ENCODE measurements at regions of chrX and their contacts with region 1.

Region 1: DNA sequence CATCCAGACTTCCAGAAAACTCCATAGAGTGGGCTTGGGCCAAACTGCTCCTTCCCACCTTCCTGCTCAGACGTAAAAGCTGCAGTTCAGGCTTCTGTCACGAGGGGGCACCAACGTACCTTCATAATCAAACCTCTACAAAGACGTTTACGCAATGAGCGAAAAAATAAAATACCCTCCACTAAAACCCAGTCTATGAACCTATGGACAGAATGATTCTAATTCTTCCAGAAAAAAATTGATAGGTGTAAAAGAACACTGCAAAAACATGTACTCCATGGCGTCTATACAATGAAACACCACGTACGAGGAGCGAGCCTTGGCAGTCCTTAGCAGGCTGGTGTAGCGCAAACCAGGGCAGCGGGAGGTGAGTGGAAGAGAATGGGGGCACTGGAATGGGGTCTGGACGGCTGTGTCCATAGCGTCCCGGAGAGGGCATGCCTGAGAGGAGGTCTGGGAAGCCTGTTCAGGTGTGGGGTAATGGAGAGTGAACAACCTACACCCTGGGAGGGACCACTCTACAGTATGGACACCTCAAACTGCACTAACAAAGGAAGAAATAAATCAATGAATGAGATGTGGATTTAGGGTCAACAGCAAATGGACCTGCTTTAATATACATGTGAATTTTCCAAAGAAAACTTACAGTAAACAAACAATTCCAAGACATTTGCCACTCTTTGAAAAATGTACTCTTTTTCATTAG is 14.4 kb upstream of the RAB40A start:
- DNase-seq: peak; percentile 60 to 79
- ATAC-seq: peak; percentile 70 to 83 (median 75)
- H3K4me3 ChIP-seq: no peak overlapping the region
- H3K4me3 Mint-ChIP-seq: peak overlapping the region; percentile 51
- H3K27ac ChIP-seq: no peak overlapping the region
- H3K27ac Mint-ChIP-seq: no peak overlapping the region
- H3K4me1 ChIP-seq: peaks cover 3% of the 10 kb centered on the region
- H3K4me1 Mint-ChIP-seq: peaks cover 4 to 6% of the 10 kb centered on the region in 2 donors
- H3K27me3 ChIP-seq: no peaks in the 10 kb centered on the region
- H3K27me3 Mint-ChIP-seq: peaks cover 3 to 21% of the 10 kb centered on the region in 2 donors
- CTCF ChIP-seq: peak; percentile 63

Region 2: DNA sequence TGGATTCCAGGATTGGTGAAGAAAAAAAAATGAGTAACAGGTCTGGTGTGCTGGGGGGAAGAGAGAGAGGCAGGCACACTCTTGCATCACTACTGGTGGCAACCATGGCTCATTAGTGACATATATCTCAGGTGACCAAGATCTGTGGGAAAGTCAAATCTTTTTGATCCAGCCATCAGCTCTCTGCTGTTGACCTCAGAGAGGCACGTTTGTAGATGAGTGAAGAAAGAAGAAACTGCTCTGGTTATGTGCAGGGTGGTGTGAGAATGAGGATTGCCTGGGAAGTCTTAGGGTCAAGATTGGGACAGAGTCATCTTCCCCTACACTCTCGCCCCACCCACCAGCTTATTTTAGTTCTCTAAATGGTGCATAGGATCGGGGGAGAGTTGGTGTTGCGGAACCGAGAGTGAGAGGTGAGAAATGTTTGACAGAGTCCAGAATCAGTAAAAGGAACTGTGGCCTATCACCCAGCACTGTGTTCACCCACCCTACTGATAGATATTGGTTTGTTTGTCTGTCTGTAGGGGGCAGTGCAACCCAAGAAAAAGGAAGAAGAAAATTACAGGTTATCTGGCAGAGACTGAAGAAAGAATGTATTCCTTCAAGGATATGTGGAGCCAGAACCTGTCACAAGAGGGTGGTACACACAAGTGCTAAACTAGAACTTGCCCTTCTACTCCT is 1937.8 kb before region 1 on chrX:
- intact Hi-C with region 1: no loop called
- DNase-seq: peak in 1 of 2 donors; percentile 78
- ATAC-seq: peak; percentile 75 to 83 (median 81)
- H3K4me3 ChIP-seq: no peak overlapping the region
- H3K4me3 Mint-ChIP-seq: no peak overlapping the region
- H3K27ac ChIP-seq: no peak overlapping the region
- H3K27ac Mint-ChIP-seq: no peak overlapping the region
- H3K4me1 ChIP-seq: no peaks in the 10 kb centered on the region
- H3K4me1 Mint-ChIP-seq: no peaks in the 10 kb centered on the region
- H3K27me3 ChIP-seq: no peaks in the 10 kb centered on the region
- H3K27me3 Mint-ChIP-seq: peaks cover 15 to 23% of the 10 kb centered on the region in 2 donors
- CTCF ChIP-seq: peak; percentile 67

Region 3: DNA sequence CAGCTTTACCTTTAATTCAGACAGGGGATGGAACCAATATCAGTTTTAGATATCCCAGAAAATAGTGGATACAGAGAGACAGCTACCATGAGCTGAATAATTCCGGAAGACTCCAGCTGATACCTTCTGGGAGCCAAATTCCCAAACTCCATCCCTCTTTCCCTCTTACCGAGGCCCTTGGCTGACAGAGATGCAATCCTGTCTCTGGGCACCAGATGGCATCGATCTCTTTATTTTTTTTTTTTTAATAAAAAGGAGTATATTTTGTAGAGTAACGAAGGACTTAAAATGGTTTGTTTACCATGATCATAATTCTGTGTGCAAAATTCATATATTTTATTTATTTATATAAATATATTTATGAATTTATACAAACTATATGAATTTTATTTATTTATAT is 45.3 kb before region 1 on chrX:
- intact Hi-C with region 1: no loop called
- DNase-seq: peak in 1 of 2 donors; percentile 2
- ATAC-seq: no peak
- H3K4me3 ChIP-seq: no peak overlapping the region
- H3K4me3 Mint-ChIP-seq: no peak overlapping the region
- H3K27ac ChIP-seq: no peak overlapping the region
- H3K27ac Mint-ChIP-seq: no peak overlapping the region
- H3K4me1 ChIP-seq: no peaks in the 10 kb centered on the region
- H3K4me1 Mint-ChIP-seq: no peaks in the 10 kb centered on the region
- H3K27me3 ChIP-seq: no peaks in the 10 kb centered on the region
- H3K27me3 Mint-ChIP-seq: peaks cover 3 to 7% of the 10 kb centered on the region in 2 donors
- CTCF ChIP-seq: no peak

Region 4: GRCh38 chrX:103503163-103503852 is 30.4 kb before region 1 on chrX:
- intact Hi-C with region 1: no loop called
- DNase-seq: no peak
- ATAC-seq: no peak
- H3K4me3 ChIP-seq: no peak overlapping the region
- H3K4me3 Mint-ChIP-seq: no peak overlapping the region
- H3K27ac ChIP-seq: no peak overlapping the region
- H3K27ac Mint-ChIP-seq: no peak overlapping the region
- H3K4me1 ChIP-seq: no peaks in the 10 kb centered on the region
- H3K4me1 Mint-ChIP-seq: no peaks in the 10 kb centered on the region
- H3K27me3 ChIP-seq: no peaks in the 10 kb centered on the region
- H3K27me3 Mint-ChIP-seq: peaks cover 0 to 20% of the 10 kb centered on the region in 2 donors
- CTCF ChIP-seq: no peak

Region 5: GRCh38 chrX:103711533-103712369 is 178.1 kb after region 1 on chrX:
- intact Hi-C with region 1: loop called (anchors 2 kb)
- DNase-seq: peak; percentile 19 to 70
- ATAC-seq: peak; percentile 63 to 74 (median 68)
- H3K4me3 ChIP-seq: no peak overlapping the region
- H3K4me3 Mint-ChIP-seq: no peak overlapping the region
- H3K27ac ChIP-seq: no peak overlapping the region
- H3K27ac Mint-ChIP-seq: no peak overlapping the region
- H3K4me1 ChIP-seq: no peaks in the 10 kb centered on the region
- H3K4me1 Mint-ChIP-seq: no peaks in the 10 kb centered on the region
- H3K27me3 ChIP-seq: no peaks in the 10 kb centered on the region
- H3K27me3 Mint-ChIP-seq: peaks cover 4 to 8% of the 10 kb centered on the region in 2 donors
- CTCF ChIP-seq: peak; percentile 54

Region 6: DNA sequence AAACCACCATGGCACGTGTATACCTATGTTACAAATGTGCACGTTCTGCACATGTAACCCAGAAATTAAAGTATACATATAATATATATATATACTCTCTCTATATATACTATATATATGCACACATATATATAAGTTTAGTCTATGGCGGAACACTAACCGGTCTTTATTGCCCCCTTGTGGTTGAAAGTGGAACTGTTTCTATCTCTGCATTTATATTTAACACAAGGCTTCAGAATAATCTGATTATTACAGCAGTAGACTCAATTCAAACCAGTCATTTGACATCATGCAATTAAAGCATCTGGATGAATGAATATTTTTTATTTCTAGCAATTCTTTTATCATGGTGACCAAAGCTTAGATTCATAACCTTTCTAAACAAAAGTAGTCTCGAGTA is 283.8 kb after region 1 on chrX:
- intact Hi-C with region 1: loop called (anchors 1 kb)
- DNase-seq: peak in 1 of 2 donors; percentile 74
- ATAC-seq: peak in 2 of 3 donors; percentile 64 to 79
- H3K4me3 ChIP-seq: no peak overlapping the region
- H3K4me3 Mint-ChIP-seq: no peak overlapping the region
- H3K27ac ChIP-seq: no peak overlapping the region
- H3K27ac Mint-ChIP-seq: no peak overlapping the region
- H3K4me1 ChIP-seq: no peaks in the 10 kb centered on the region
- H3K4me1 Mint-ChIP-seq: no peaks in the 10 kb centered on the region
- H3K27me3 ChIP-seq: no peaks in the 10 kb centered on the region
- H3K27me3 Mint-ChIP-seq: peaks cover 4 to 19% of the 10 kb centered on the region in 2 donors
- CTCF ChIP-seq: peak; percentile 71

Measured in natural killer cell (primary cell).